ENCODE measurements at regions of chr3 and their contacts with region 1.

Region 1: DNA sequence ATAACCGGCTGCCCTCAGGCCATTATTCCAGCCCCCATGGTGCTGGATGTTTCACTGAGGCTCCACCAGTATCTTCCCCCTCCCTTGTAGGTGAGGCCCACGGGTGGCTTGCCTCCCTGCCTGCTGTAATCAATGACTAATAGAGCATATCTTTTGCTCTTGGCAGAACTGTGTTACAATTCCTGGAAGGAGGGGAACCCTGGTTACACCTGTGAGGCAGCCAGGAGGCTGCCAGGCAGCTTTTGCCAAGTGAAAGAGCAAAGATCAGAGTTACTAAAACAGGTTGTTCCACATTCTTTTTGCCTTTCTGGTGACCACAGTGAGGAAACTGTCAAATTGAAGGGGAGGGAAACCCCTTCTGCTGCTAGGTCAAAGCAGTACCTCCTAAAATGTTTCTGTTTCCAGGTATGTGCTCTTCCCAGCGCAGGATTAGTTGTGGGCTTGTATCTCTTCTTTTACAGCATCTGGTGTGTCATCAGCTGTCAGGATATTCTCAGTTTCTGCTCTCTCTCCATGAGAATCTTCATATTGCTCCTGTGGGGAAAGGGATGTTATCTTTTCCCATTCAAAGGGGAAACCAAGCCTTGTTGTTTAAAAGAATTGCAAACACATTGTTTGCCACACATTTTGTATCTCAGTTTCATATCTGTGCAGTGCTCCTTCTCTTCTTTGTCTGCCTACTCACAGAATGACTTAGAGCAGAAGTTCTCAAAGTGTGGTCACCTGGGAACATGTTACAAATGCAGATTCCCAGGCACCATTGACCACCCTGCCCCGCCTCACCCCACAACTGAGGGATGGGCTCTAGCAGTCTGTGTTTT is 137.4 kb upstream of the UMPS start:
- DNase-seq: peak; percentile 73
- H3K4me3 Mint-ChIP-seq: no peak overlapping the region
- H3K27ac Mint-ChIP-seq: peak overlapping the region; percentile 83
- H3K4me1 Mint-ChIP-seq: peaks cover 49% of the 10 kb centered on the region
- H3K27me3 Mint-ChIP-seq: peaks cover 7% of the 10 kb centered on the region

Region 2: DNA sequence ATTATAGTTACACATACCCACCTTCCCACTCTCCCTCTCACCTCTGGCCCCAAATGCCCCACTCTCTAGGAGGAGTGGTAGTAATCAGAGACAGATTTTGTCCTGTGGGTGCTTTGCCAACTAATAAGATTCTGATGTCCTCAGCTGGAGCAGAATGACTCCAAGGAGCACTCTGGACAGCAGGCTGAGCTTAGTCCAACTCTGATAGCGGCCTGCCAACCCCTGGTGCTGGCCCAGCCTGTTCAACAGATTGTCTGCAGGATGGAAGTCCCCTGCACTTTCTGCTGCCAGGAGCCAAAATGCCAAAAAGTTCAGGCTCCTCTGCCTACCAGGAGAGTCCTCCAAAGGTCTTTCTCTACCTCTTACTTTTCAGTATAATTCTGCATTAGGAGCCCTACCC is 23.1 kb before region 1 on chr3:
- CTCF ChIA-PET with region 1: no interaction called
- intact Hi-C with region 1: loop called (anchors 2 kb)
- DNase-seq: no peak
- H3K4me3 Mint-ChIP-seq: no peak overlapping the region
- H3K27ac Mint-ChIP-seq: no peak overlapping the region
- H3K4me1 Mint-ChIP-seq: no peaks in the 10 kb centered on the region
- H3K27me3 Mint-ChIP-seq: no peaks in the 10 kb centered on the region

Region 3: GRCh38 chr3:124607160-124607559 is 14.3 kb after region 1 on chr3:
- CTCF ChIA-PET with region 1: no interaction called
- intact Hi-C with region 1: no loop called
- DNase-seq: no peak
- H3K4me3 Mint-ChIP-seq: no peak overlapping the region
- H3K27ac Mint-ChIP-seq: no peak overlapping the region
- H3K4me1 Mint-ChIP-seq: peaks cover 6% of the 10 kb centered on the region
- H3K27me3 Mint-ChIP-seq: peaks cover 3% of the 10 kb centered on the region

Region 4: DNA sequence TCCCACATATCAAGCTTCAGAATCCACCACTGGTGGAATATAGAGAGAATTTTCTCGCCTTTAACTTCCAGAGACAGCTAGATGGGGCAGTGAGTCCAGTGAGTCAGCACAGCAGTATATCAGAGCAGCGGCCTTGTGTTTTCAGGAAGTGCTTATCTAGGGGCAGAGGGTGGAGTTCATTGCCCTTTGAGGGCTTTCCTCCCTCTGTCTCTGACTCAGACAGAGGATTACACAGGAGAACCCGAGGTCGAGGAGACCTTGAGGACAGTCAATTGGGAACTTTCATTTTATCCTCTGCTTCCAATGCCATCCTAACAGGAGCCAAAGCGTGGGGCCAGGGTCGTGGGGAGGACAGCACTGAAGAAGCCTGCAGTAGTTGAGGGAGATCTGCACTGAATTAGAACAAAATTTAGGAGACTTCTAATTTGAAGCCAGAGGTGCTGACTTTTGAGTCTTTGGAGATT is 27.8 kb after region 1 on chr3:
- CTCF ChIA-PET with region 1: no interaction called
- intact Hi-C with region 1: loop called (anchors 1 kb)
- DNase-seq: peak; percentile 61
- H3K4me3 Mint-ChIP-seq: no peak overlapping the region
- H3K27ac Mint-ChIP-seq: peak overlapping the region; percentile 7
- H3K4me1 Mint-ChIP-seq: peaks cover 43% of the 10 kb centered on the region
- H3K27me3 Mint-ChIP-seq: no peaks in the 10 kb centered on the region

Region 5: GRCh38 chr3:124639406-124640237 is 46.8 kb after region 1 on chr3:
- CTCF ChIA-PET with region 1: no interaction called
- intact Hi-C with region 1: loop called (anchors 1 kb)
- DNase-seq: peak; percentile 39
- H3K4me3 Mint-ChIP-seq: peak overlapping the region; percentile 2
- H3K27ac Mint-ChIP-seq: peak overlapping the region; percentile 77
- H3K4me1 Mint-ChIP-seq: peaks cover 29% of the 10 kb centered on the region
- H3K27me3 Mint-ChIP-seq: no peaks in the 10 kb centered on the region

Region 6: DNA sequence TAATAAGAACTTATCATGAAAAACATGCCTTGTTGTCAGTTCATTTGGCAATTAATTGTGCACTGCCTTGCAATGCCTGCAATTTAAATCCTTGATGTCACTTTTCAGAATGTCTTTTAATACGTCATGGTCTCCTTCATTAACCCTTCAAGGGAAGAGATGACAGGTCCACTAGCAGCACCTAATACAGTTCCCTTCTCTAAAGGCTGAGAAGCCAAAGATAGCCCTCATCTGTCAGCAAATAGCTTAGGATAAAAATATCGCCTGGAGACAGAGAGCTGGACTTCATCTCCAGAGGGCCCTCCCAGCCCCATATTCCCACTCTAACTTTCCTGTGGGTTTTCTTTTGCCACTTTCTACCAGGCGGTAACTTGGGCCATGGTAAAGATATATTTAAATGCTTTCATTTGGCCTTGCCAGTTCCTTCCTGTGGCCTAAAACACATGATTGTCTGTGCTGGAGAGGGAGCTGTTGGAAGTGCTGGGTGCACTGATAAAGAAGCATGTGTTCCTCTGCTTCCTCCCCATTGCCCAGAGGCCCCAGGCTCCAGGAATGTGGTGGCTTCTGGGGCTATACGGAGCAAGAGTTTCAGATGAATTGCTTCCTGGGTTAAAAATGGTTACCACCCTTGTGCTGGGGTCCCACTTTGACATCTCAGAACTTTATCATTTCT is 61.1 kb after region 1 on chr3:
- CTCF ChIA-PET with region 1: no interaction called
- intact Hi-C with region 1: loop called (anchors 2 kb)
- DNase-seq: no peak
- H3K4me3 Mint-ChIP-seq: no peak overlapping the region
- H3K27ac Mint-ChIP-seq: no peak overlapping the region
- H3K4me1 Mint-ChIP-seq: peaks cover 26% of the 10 kb centered on the region
- H3K27me3 Mint-ChIP-seq: no peaks in the 10 kb centered on the region

Region 7: GRCh38 chr3:124660599-124660998 is 67.8 kb after region 1 on chr3:
- CTCF ChIA-PET with region 1: no interaction called
- intact Hi-C with region 1: loop called (anchors 1 kb)
- DNase-seq: no peak
- H3K4me3 Mint-ChIP-seq: no peak overlapping the region
- H3K27ac Mint-ChIP-seq: peak overlapping the region; percentile 57
- H3K4me1 Mint-ChIP-seq: peaks cover 24% of the 10 kb centered on the region
- H3K27me3 Mint-ChIP-seq: peaks cover 2% of the 10 kb centered on the region

Region 8: DNA sequence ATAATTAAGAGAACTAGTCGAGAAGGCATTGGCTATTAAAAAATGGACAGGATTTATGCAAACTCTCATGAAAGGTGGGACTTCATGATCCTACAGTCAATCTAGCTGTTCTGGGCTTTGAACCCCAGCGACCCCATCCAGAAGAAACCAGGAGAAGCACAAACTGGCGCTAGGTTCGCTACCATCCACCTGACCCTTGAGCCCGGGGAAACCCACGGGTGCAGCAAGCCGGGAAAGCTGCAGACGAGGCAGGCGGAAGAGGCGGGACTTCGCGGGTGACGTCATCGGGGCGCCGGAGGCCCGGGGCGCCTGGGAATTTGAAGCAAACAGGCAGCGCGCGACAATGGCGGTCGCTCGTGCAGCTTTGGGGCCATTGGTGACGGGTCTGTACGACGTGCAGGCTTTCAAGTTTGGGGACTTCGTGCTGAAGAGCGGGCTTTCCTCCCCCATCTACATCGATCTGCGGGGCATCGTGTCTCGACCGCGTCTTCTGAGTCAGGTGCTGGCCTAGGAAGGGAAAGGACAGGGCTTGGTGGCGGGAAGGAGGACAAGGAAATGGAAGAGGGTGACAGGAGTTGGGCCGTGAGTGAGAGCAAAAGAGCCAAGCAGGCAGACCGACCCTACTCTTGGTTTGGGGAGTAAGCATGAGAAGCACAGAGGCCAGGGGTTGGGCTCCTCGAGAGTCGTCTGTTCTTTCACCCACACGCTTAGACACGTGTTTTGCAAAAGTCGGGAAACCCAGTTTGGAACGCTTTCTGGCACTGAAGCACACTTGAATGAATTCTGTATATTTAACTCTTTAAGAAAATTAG is 137.5 kb after region 1 on chr3 and contains the start of gene UMPS:
- CTCF ChIA-PET with region 1: no interaction called
- intact Hi-C with region 1: loop called (anchors 1 kb)
- DNase-seq: peak; percentile 96
- H3K4me3 Mint-ChIP-seq: peak within 1 kb of the TSS; percentile 99
- H3K27ac Mint-ChIP-seq: peak within 1 kb of the TSS; percentile 95
- H3K4me1 Mint-ChIP-seq: peaks cover 33% of the 10 kb centered on the region
- H3K27me3 Mint-ChIP-seq: peaks cover 7% of the 10 kb centered on the region
- total RNA-seq, gene UMPS: 29.6 to 34.1 TPM

Measured in activated naive CD4-positive, alpha-beta T cell treated with anti-CD3 and anti-CD28 coated beads for 36 hours (primary cell).